Activated CD8-positive, alpha-beta T cell treated with anti-CD3 and anti-CD28 coated beads for 36 hours (primary cell): ENCODE measurements at regions of chr9 and their contacts with region 1.

Region 1: GRCh38 chr9:94860968-94861871 is 134.7 kb downstream of the AOPEP start:
- DNase-seq: peak; percentile 85
- ATAC-seq: peak; percentile 90
- H3K4me3 Mint-ChIP-seq: peak overlapping the region; percentile 45
- H3K27ac Mint-ChIP-seq: peak overlapping the region; percentile 82
- H3K4me1 Mint-ChIP-seq: peaks cover 33% of the 10 kb centered on the region
- H3K27me3 Mint-ChIP-seq: no peaks in the 10 kb centered on the region
- CTCF ChIP-seq: no peak

Region 2: GRCh38 chr9:94802793-94803192 is 58.4 kb before region 1 on chr9:
- CTCF ChIA-PET with region 1: no interaction called
- POLR2A ChIA-PET with region 1: no interaction called
- intact Hi-C with region 1: loop called (anchors 5 kb)
- DNase-seq: peak; percentile 75
- ATAC-seq: peak; percentile 93
- H3K4me3 Mint-ChIP-seq: no peak overlapping the region
- H3K27ac Mint-ChIP-seq: no peak overlapping the region
- H3K4me1 Mint-ChIP-seq: peaks cover 30% of the 10 kb centered on the region
- H3K27me3 Mint-ChIP-seq: no peaks in the 10 kb centered on the region
- CTCF ChIP-seq: no peak

Region 3: GRCh38 chr9:94887721-94888120 is 26.5 kb after region 1 on chr9:
- CTCF ChIA-PET with region 1: no interaction called
- POLR2A ChIA-PET with region 1: no interaction called
- intact Hi-C with region 1: no loop called
- DNase-seq: no peak
- ATAC-seq: no peak
- H3K4me3 Mint-ChIP-seq: no peak overlapping the region
- H3K27ac Mint-ChIP-seq: no peak overlapping the region
- H3K4me1 Mint-ChIP-seq: no peaks in the 10 kb centered on the region
- H3K27me3 Mint-ChIP-seq: no peaks in the 10 kb centered on the region
- CTCF ChIP-seq: no peak

Region 4: DNA sequence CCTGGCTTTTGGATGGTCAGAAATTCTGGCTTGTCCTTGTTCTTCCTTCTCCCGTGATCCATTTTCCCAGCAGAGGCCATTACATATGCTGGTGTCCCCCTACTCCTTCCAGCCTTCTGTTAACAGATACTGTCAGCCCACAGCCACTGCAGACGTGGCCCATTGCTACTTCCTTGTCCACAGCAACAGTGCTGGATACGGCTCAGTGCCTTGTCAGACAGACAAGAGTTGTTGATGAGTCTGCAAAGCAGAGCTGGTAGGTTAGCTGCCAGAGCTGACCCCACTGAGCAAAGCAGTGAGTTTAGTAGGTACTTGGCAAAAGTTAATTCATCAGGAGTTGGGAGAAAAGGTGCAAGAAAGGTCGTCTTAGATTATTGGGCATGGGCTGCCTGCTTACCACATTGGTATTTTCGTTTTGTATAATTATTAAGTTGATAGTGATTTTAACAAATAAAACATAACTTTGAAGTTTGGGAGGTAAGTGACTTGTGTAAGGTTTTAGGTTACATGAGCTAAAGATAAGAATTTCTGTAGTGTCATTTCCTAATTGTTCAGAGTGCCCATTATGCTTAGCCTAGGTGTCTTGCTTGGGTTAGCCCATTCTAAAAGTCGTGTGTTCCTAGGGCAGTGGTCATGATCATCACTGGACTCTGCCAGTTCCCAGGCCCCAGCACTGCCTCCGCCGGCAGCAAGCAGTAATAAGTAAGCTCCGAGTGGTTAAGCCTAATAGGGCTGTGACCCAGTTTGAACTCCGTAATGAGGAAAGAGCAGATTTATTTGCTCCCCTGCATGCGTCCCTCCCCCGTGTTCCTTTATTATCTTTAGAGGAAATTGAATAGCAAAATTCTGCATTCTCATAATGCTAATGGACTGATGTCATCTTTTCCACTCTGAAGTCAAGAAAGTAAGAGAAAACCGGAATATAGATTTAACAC is 164.3 kb after region 1 on chr9:
- CTCF ChIA-PET with region 1: no interaction called
- POLR2A ChIA-PET with region 1: no interaction called
- intact Hi-C with region 1: no loop called
- DNase-seq: no peak
- ATAC-seq: no peak
- H3K4me3 Mint-ChIP-seq: no peak overlapping the region
- H3K27ac Mint-ChIP-seq: no peak overlapping the region
- H3K4me1 Mint-ChIP-seq: no peaks in the 10 kb centered on the region
- H3K27me3 Mint-ChIP-seq: no peaks in the 10 kb centered on the region
- CTCF ChIP-seq: no peak